ENCODE measurements at regions of chr6 and their contacts with region 1.

Region 1: DNA sequence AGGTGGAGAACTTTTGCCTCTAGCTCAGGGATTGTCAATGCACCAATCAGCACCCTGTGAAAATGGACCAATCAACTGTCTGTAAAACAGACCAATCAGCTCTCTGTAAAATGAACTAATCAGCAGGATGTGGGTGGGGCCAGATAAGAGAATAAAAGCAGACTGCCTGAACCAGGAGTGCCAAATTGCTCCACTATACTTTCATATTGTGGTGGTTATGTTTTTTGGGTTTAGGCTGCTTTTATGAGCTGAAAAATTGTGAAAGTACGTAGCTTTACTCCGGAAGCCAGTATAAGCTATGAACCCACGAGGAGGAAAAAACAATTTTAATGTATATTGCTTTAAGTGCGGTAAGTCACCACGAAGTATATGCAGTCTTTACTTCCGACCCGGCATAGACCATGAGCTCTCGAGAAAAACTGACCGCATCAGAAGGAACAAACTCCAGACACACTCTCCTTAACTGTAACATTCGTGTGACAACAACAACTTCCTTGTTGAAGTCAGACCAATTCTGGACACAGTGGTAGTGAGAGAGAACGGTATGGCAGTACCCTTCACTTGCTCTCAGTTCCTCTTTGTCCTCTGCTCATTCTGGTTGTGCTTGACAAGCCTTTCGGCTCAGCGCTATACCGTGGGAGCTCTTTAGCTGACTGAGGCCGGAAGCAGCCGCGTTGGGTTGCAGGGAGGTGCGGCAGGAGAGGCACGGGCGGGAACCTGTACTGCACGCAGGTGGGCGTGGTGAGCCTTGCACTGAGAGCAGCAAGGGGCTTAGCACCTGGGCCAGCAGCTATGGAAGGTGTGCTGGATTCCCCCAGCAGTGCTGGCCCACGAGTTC is 81.9 kb upstream of the E2F3 start:
- DNase-seq: peak; percentile 50 to 92 (median 76)
- ATAC-seq: peak; percentile 92
- H3K4me3 ChIP-seq: peak overlapping the region; percentile 62
- H3K4me3 Mint-ChIP-seq: peak overlapping the region; percentile 94
- H3K27ac ChIP-seq: peak overlapping the region; percentile 81 to 82
- H3K27ac Mint-ChIP-seq: peak overlapping the region; percentile 98
- H3K4me1 ChIP-seq: peaks cover 14% of the 10 kb centered on the region
- H3K4me1 Mint-ChIP-seq: peaks cover 18% of the 10 kb centered on the region
- H3K27me3 ChIP-seq: no peaks in the 10 kb centered on the region
- H3K27me3 Mint-ChIP-seq: no peaks in the 10 kb centered on the region
- CTCF ChIP-seq: no peak

Region 2: DNA sequence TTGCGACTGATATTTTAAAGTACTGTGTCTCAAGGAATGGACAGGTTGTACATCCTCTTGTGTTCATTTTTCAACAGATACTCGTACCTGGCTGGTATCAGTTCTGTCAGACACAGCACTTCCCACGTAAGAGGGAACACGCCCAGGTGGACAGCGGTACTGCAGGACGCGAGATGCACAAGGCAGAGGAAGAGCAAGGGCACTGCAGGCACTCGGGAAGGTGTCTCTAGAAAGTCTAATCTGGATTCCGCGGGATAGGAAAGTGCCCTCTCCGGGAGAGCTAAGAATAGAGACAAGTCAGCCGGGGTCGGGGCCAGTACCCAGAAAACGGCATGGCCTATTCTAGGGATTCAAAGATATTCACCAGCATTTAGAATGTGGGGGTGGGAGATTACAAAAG is 13.2 kb before region 1 on chr6:
- CTCF ChIA-PET with region 1: no interaction called
- POLR2A ChIA-PET with region 1: interaction called, 11 read pairs
- intact Hi-C with region 1: no loop called
- DNase-seq: no peak
- ATAC-seq: no peak
- H3K4me3 ChIP-seq: no peak overlapping the region
- H3K4me3 Mint-ChIP-seq: no peak overlapping the region
- H3K27ac ChIP-seq: no peak overlapping the region
- H3K27ac Mint-ChIP-seq: no peak overlapping the region
- H3K4me1 ChIP-seq: no peaks in the 10 kb centered on the region
- H3K4me1 Mint-ChIP-seq: no peaks in the 10 kb centered on the region
- H3K27me3 ChIP-seq: no peaks in the 10 kb centered on the region
- H3K27me3 Mint-ChIP-seq: no peaks in the 10 kb centered on the region
- CTCF ChIP-seq: no peak

Region 3: GRCh38 chr6:20366091-20366832 is 46.5 kb after region 1 on chr6:
- CTCF ChIA-PET with region 1: no interaction called
- POLR2A ChIA-PET with region 1: interaction called, 254 read pairs
- intact Hi-C with region 1: loop called (anchors 5 kb)
- DNase-seq: peak; percentile 8 to 78 (median 58)
- ATAC-seq: peak; percentile 68
- H3K4me3 ChIP-seq: peak overlapping the region; percentile 9
- H3K4me3 Mint-ChIP-seq: peak overlapping the region; percentile 74
- H3K27ac ChIP-seq: peak overlapping the region; percentile 37 to 84
- H3K27ac Mint-ChIP-seq: peak overlapping the region; percentile 91
- H3K4me1 ChIP-seq: peaks cover 53% of the 10 kb centered on the region
- H3K4me1 Mint-ChIP-seq: peaks cover 59% of the 10 kb centered on the region
- H3K27me3 ChIP-seq: no peaks in the 10 kb centered on the region
- H3K27me3 Mint-ChIP-seq: no peaks in the 10 kb centered on the region
- CTCF ChIP-seq: no peak

Region 4: DNA sequence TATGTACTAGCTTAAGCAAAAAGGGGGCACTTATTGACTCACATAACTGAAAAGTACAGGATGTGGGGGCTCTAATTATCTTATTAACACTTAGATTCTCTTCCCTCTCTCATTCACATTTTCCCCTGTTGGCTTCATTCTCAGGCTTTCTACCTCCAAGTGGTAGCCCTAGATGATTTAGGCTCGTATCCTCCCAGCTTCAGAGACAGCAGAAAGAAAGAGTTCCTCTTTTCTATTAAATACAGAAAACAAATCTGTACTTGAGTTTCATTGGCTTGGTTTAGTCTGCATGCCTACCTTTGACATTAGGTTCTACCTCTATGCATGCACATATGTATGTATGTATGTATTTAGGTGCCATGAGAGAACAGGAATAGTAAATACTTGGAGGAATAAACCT is 66.5 kb after region 1 on chr6:
- CTCF ChIA-PET with region 1: no interaction called
- POLR2A ChIA-PET with region 1: interaction called, 12 read pairs
- intact Hi-C with region 1: no loop called
- DNase-seq: no peak
- ATAC-seq: no peak
- H3K4me3 ChIP-seq: no peak overlapping the region
- H3K4me3 Mint-ChIP-seq: no peak overlapping the region
- H3K27ac ChIP-seq: no peak overlapping the region
- H3K27ac Mint-ChIP-seq: no peak overlapping the region
- H3K4me1 ChIP-seq: no peaks in the 10 kb centered on the region
- H3K4me1 Mint-ChIP-seq: peaks cover 2% of the 10 kb centered on the region
- H3K27me3 ChIP-seq: no peaks in the 10 kb centered on the region
- H3K27me3 Mint-ChIP-seq: no peaks in the 10 kb centered on the region
- CTCF ChIP-seq: no peak

Region 5: GRCh38 chr6:20534295-20535262 is 214.8 kb after region 1 on chr6 and contains the start of gene CDKAL1:
- CTCF ChIA-PET with region 1: no interaction called
- POLR2A ChIA-PET with region 1: interaction called, 15 read pairs
- intact Hi-C with region 1: no loop called
- DNase-seq: peak; percentile 81 to 94 (median 86)
- ATAC-seq: peak; percentile 87
- H3K4me3 ChIP-seq: peak within 1 kb of the TSS; percentile 86
- H3K4me3 Mint-ChIP-seq: peak within 1 kb of the TSS; percentile 99
- H3K27ac ChIP-seq: peak within 1 kb of the TSS; percentile 74 to 86
- H3K27ac Mint-ChIP-seq: peak within 1 kb of the TSS; percentile 98
- H3K4me1 ChIP-seq: peaks cover 3% of the 10 kb centered on the region
- H3K4me1 Mint-ChIP-seq: peaks cover 43% of the 10 kb centered on the region
- H3K27me3 ChIP-seq: no peaks in the 10 kb centered on the region
- H3K27me3 Mint-ChIP-seq: peaks cover 6% of the 10 kb centered on the region
- CTCF ChIP-seq: no peak
- total RNA-seq, gene CDKAL1: 21.3 to 23.9 TPM